ENCODE measurements at regions of chr1 and their contacts with region 1.

Region 1: GRCh38 chr1:211323156-211324063 is 3.2 kb upstream of the TRAF5 start:
- DNase-seq: peak; percentile 56
- H3K4me3 Mint-ChIP-seq: no peak overlapping the region
- H3K27ac Mint-ChIP-seq: peak overlapping the region; percentile 81
- H3K4me1 Mint-ChIP-seq: peaks cover 72% of the 10 kb centered on the region
- H3K27me3 Mint-ChIP-seq: no peaks in the 10 kb centered on the region

Region 2: DNA sequence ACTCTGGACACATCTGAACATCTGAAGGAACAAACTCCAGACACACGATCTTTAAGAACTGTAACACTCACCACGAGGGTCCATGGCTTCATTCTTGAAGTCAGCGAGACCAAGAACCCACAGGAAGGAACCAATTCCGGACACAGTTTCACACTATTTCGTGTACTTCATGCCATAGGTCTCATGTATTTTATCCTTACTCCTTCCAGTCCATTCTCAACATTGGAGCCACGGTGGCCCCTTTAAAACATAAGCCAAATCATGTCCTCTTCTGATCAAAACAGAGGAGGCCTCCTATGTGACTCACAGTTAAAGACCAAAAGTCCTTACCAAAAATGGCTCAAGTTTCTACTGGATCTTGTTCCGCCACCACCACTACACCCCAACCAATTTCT is 94.0 kb before region 1 on chr1:
- intact Hi-C with region 1: loop called (anchors 1 kb)
- DNase-seq: no peak
- H3K4me3 Mint-ChIP-seq: peak overlapping the region; percentile 51
- H3K27ac Mint-ChIP-seq: peak overlapping the region; percentile 63
- H3K4me1 Mint-ChIP-seq: peaks cover 26% of the 10 kb centered on the region
- H3K27me3 Mint-ChIP-seq: peaks cover 3% of the 10 kb centered on the region

Region 3: DNA sequence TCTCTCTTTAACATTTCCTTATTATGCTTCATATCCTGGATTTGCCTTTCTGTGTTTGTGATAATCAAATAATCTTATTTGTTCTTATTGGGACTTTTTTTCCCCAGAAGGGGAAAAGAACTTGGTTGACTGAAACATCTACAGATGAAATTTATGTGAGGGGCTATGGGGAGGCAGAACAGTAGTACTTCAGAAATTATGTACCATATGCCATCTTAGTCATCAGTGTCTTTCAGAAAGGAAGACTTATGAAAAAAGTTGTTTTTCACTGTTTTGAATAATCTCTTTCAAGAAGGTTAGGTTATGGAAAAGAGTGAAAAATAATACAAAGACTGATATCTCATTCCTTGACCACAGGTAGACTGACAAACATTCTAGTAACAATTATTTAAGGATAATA is 27.0 kb before region 1 on chr1:
- intact Hi-C with region 1: loop called (anchors 2 kb)
- DNase-seq: no peak
- H3K4me3 Mint-ChIP-seq: no peak overlapping the region
- H3K27ac Mint-ChIP-seq: peak overlapping the region; percentile 59
- H3K4me1 Mint-ChIP-seq: peaks cover 24% of the 10 kb centered on the region
- H3K27me3 Mint-ChIP-seq: no peaks in the 10 kb centered on the region

Region 4: DNA sequence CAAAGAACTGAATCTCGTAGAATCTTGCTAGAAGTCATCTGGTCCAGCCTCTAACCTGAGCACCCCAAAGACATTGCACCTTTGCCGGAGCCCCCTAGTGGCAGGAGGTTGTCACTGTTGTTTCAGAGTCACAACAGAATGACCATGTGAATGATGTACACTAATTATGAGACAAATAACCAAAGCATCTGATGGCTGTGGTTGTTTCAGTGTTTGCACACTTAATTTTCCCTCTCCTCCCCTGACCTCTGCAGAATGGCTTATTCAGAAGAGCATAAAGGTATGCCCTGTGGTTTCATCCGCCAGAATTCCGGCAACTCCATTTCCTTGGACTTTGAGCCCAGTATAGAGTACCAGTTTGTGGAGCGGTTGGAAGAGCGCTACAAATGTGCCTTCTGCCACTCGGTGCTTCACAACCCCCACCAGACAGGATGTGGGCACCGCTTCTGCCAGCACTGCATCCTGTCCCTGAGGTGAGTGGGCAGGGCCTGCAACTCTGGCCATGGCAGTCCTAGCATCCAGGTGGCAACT is 29.6 kb after region 1 on chr1:
- intact Hi-C with region 1: loop called (anchors 1 kb)
- DNase-seq: no peak
- H3K4me3 Mint-ChIP-seq: peak overlapping the region; percentile 66
- H3K27ac Mint-ChIP-seq: peak overlapping the region; percentile 80
- H3K4me1 Mint-ChIP-seq: peaks cover 65% of the 10 kb centered on the region
- H3K27me3 Mint-ChIP-seq: no peaks in the 10 kb centered on the region

Region 5: DNA sequence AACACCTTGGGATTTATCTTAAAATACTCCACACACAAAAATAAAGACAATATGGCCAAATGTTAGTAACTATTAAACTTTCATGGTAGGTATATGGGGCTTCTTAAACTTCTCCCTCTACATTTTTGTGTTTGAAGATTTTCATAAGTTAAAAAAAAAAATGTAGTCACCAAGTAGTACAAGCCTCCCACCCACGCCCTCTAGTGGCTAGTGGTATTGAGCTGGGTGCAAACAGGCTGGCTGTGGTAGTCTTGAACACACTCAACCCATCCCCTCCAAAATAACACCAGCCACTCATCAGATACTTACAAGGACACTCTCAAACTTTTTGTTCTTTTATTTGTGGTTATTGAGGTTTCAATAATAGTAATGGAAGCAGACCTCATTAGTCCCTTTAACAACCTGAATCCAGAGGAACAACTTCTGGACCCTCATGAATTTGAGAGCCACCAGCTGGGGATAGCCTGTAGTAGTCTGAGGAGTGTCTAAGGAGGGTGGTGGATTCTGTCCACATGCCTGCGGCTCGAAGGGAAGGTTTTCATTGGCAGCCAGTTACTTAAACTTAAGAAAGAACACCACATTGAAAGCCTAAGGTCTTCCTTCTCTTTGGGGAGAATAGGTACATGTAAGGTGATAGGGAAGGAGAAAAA is 152.9 kb after region 1 on chr1:
- intact Hi-C with region 1: loop called (anchors 1 kb)
- DNase-seq: peak; percentile 64
- H3K4me3 Mint-ChIP-seq: no peak overlapping the region
- H3K27ac Mint-ChIP-seq: no peak overlapping the region
- H3K4me1 Mint-ChIP-seq: no peaks in the 10 kb centered on the region
- H3K27me3 Mint-ChIP-seq: peaks cover 27% of the 10 kb centered on the region

Region 6: GRCh38 chr1:211654838-211655787 is 331.7 kb after region 1 on chr1:
- intact Hi-C with region 1: loop called (anchors 2 kb)
- DNase-seq: peak; percentile 63
- H3K4me3 Mint-ChIP-seq: no peak overlapping the region
- H3K27ac Mint-ChIP-seq: no peak overlapping the region
- H3K4me1 Mint-ChIP-seq: peaks cover 6% of the 10 kb centered on the region
- H3K27me3 Mint-ChIP-seq: peaks cover 3% of the 10 kb centered on the region

Region 7: DNA sequence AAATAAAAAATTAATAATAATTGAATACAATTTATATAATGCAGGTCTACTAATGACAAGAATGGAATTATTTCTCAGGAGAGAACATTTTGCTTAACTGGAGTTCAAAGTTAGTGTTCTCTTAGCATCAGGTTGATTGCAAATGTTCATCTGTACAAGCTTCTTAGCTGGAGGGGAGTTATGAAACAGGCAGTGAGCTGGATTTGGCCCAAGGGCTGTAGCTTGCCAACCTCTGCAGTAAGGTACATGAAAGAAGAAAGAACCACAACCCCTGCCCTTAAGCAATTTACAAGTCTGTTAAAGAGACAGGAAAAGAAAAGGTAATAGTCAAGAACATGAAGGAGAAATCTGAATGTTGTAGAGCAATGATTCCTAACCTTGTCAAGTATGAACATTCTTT is 490.2 kb after region 1 on chr1:
- intact Hi-C with region 1: no loop called
- DNase-seq: no peak
- H3K4me3 Mint-ChIP-seq: no peak overlapping the region
- H3K27ac Mint-ChIP-seq: no peak overlapping the region
- H3K4me1 Mint-ChIP-seq: peaks cover 4% of the 10 kb centered on the region
- H3K27me3 Mint-ChIP-seq: no peaks in the 10 kb centered on the region

Region 8: GRCh38 chr1:212595787-212596714 is 1272.6 kb after region 1 on chr1:
- intact Hi-C with region 1: loop called (anchors 1 kb)
- DNase-seq: peak; percentile 64
- H3K4me3 Mint-ChIP-seq: peak overlapping the region; percentile 68
- H3K27ac Mint-ChIP-seq: peak overlapping the region; percentile 96
- H3K4me1 Mint-ChIP-seq: peaks cover 27% of the 10 kb centered on the region
- H3K27me3 Mint-ChIP-seq: peaks cover 10% of the 10 kb centered on the region